ENCODE measurements at regions of chr5 and their contacts with region 1.

Region 1: DNA sequence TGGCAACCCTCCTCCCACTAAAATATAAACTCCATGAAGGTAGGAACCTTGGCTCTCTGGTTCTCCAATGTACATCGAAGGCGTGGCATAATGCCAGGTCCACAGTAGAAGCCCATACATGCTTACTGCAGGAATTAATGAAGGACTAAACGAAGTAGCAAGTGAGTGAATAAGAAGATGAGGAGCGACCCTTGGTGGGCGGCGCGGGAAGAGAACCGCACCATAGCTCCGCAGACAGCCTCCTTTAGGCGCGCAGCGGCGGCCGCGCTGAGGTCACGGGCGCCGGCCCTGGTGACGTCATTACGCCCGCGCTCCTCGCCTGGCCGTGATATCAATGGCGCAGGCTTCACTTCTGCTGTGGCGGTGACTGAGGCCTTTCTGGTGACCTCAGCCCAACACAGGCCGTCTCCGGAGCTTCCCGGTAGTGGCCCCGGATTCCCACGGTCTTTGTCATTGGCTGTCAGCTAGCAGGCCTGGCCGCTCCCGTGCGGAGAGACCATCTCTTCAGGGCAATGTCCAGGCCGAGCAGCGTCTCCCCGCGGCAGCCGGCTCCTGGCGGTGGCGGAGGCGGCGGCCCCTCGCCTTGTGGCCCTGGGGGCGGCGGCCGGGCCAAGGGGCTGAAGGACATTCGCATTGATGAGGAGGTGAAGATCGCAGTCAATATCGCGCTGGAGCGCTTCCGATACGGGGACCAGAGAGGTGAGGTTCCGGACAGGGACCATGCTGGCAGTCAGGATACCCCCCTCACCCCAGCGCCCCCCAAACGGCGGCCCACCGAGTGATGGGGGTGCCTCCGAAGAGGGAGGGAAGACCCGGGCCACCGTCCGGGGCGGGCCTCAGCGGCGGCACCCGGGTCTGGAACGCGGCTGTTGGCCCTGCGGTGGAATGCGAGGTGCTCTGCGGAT is at the start of gene YTHDC2:
- DNase-seq: peak; percentile 76 to 95 (median 84)
- ATAC-seq: peak; percentile 95
- H3K4me3 ChIP-seq: peak within 1 kb of the TSS; percentile 70
- H3K4me3 Mint-ChIP-seq: peak within 1 kb of the TSS; percentile 90
- H3K27ac ChIP-seq: peak within 1 kb of the TSS; percentile 71 to 74
- H3K27ac Mint-ChIP-seq: peak within 1 kb of the TSS; percentile 85
- H3K4me1 ChIP-seq: peaks cover 9% of the 10 kb centered on the region
- H3K4me1 Mint-ChIP-seq: peaks cover 42% of the 10 kb centered on the region
- H3K27me3 ChIP-seq: peaks cover 0 to 10% of the 10 kb centered on the region in 2 experiments
- H3K27me3 Mint-ChIP-seq: peaks cover 23% of the 10 kb centered on the region
- CTCF ChIP-seq: peak; percentile 24
- total RNA-seq, gene YTHDC2: 33.9 to 41.7 TPM

Region 2: GRCh38 chr5:112860929-112861637 is 652.6 kb before region 1 on chr5 and contains the start of gene SRP19:
- CTCF ChIA-PET with region 1: no interaction called
- POLR2A ChIA-PET with region 1: interaction called, 3 read pairs
- intact Hi-C with region 1: loop called in 1 of 2 experiments (anchors 10 kb)
- DNase-seq: peak; percentile 82 to 97 (median 86)
- ATAC-seq: peak; percentile 93
- H3K4me3 ChIP-seq: peak within 1 kb of the TSS; percentile 94
- H3K4me3 Mint-ChIP-seq: peak within 1 kb of the TSS; percentile 92
- H3K27ac ChIP-seq: peak within 1 kb of the TSS; percentile 65 to 88
- H3K27ac Mint-ChIP-seq: peak within 1 kb of the TSS; percentile 93
- H3K4me1 ChIP-seq: peaks cover 24% of the 10 kb centered on the region
- H3K4me1 Mint-ChIP-seq: peaks cover 36% of the 10 kb centered on the region
- H3K27me3 ChIP-seq: no peaks in the 10 kb centered on the region
- H3K27me3 Mint-ChIP-seq: peaks cover 12% of the 10 kb centered on the region
- CTCF ChIP-seq: no peak
- total RNA-seq, gene SRP19: 40.2 to 40.8 TPM

Region 3: DNA sequence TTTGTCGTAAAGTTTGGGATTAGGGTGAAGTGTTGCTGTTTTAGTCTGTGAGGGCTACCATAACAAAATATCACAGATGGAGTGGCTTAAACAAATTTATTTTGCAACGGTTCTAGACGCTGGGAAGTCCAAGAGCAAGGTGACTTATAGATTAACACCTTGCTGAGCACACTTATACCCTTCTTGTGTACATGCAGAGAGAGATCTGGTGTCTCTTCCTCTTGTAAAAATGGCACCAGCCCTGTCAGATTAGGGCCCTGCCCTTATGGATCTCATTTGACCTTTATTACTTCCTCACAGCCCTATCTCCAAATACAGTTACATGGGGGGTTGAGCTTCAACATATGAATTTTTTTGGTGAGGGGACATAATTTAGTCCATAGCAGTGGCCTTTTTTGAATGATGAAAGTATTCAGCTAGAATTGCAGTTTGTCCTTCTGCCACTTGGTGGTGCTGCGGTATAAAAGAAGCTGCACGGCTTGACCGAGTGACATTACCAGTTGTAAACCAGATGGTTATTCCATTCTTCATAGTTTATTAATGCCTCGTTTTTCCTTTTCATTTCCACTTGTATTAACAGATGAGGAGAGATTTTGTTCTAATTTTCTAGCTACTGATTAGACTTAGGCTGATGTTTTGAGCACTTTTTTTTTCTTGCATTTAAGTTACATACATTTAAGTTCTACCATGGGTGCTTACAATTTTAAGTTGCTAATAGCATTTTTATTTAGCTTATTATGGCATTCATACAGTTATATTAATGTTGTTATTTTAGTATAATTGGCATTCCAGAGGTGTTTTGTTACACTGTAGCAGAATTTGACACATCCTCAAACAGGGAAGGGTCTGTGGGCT is 517.6 kb before region 1 on chr5:
- CTCF ChIA-PET with region 1: interaction called, 3 read pairs
- POLR2A ChIA-PET with region 1: interaction called, 3 read pairs
- intact Hi-C with region 1: loop called (anchors 5 kb)
- DNase-seq: peak; percentile 60 to 84 (median 76)
- ATAC-seq: peak; percentile 85
- H3K4me3 ChIP-seq: no peak overlapping the region
- H3K4me3 Mint-ChIP-seq: no peak overlapping the region
- H3K27ac ChIP-seq: no peak overlapping the region
- H3K27ac Mint-ChIP-seq: no peak overlapping the region
- H3K4me1 ChIP-seq: no peaks in the 10 kb centered on the region
- H3K4me1 Mint-ChIP-seq: peaks cover 52% of the 10 kb centered on the region
- H3K27me3 ChIP-seq: no peaks in the 10 kb centered on the region
- H3K27me3 Mint-ChIP-seq: no peaks in the 10 kb centered on the region
- CTCF ChIP-seq: peak; percentile 98

Region 4: GRCh38 chr5:113330533-113331208 is 183.0 kb before region 1 on chr5:
- CTCF ChIA-PET with region 1: interaction called, 4 read pairs
- POLR2A ChIA-PET with region 1: no interaction called
- intact Hi-C with region 1: loop called in 1 of 2 experiments (anchors 5 kb)
- DNase-seq: peak in 4 of 14 experiments; percentile 14 to 78 (median 77)
- ATAC-seq: peak; percentile 90
- H3K4me3 ChIP-seq: no peak overlapping the region
- H3K4me3 Mint-ChIP-seq: no peak overlapping the region
- H3K27ac ChIP-seq: no peak overlapping the region
- H3K27ac Mint-ChIP-seq: peak overlapping the region; percentile 60
- H3K4me1 ChIP-seq: no peaks in the 10 kb centered on the region
- H3K4me1 Mint-ChIP-seq: peaks cover 21% of the 10 kb centered on the region
- H3K27me3 ChIP-seq: no peaks in the 10 kb centered on the region
- H3K27me3 Mint-ChIP-seq: no peaks in the 10 kb centered on the region
- CTCF ChIP-seq: peak; percentile 76

Region 5: GRCh38 chr5:113367586-113367985 is 146.1 kb before region 1 on chr5:
- CTCF ChIA-PET with region 1: no interaction called
- POLR2A ChIA-PET with region 1: no interaction called
- intact Hi-C with region 1: no loop called
- DNase-seq: no peak
- ATAC-seq: no peak
- H3K4me3 ChIP-seq: no peak overlapping the region
- H3K4me3 Mint-ChIP-seq: no peak overlapping the region
- H3K27ac ChIP-seq: no peak overlapping the region
- H3K27ac Mint-ChIP-seq: no peak overlapping the region
- H3K4me1 ChIP-seq: no peaks in the 10 kb centered on the region
- H3K4me1 Mint-ChIP-seq: no peaks in the 10 kb centered on the region
- H3K27me3 ChIP-seq: no peaks in the 10 kb centered on the region
- H3K27me3 Mint-ChIP-seq: peaks cover 8% of the 10 kb centered on the region
- CTCF ChIP-seq: no peak

Region 6: DNA sequence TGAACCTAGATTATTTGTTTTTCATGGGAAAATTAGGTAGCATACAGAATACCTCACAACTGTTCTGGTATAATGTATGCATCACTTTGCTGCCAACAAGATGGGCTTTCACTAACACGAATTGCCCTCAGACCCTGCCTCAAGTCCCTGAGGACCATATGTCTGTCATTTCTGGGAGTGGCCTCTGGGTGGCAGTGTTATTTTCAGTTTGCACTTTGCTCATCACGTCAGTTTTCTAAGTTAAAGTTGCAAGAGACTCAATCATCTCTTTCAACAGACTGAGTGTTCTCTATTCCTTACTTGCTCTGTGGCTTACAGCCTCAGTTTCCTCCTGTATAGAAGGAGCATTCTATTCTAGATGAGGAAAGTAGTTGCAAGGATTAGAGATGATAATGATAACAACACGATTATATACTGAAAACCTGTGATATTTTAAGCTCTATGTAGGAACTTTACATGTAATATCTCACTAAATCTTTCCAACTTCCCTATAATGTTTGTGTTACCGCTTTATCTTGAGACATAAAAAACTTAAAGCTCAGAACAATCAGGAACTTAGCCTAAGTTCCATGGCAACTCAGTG is 134.6 kb before region 1 on chr5:
- CTCF ChIA-PET with region 1: interaction called, 4 read pairs
- POLR2A ChIA-PET with region 1: no interaction called
- intact Hi-C with region 1: loop called (anchors 1 to 2 kb)
- DNase-seq: peak; percentile 19 to 74 (median 41)
- ATAC-seq: peak; percentile 68
- H3K4me3 ChIP-seq: no peak overlapping the region
- H3K4me3 Mint-ChIP-seq: peak overlapping the region; percentile 7
- H3K27ac ChIP-seq: no peak overlapping the region
- H3K27ac Mint-ChIP-seq: no peak overlapping the region
- H3K4me1 ChIP-seq: peaks cover 11% of the 10 kb centered on the region
- H3K4me1 Mint-ChIP-seq: peaks cover 58% of the 10 kb centered on the region
- H3K27me3 ChIP-seq: peaks cover 0 to 4% of the 10 kb centered on the region in 2 experiments
- H3K27me3 Mint-ChIP-seq: peaks cover 32% of the 10 kb centered on the region
- CTCF ChIP-seq: peak; percentile 82

Measured in CD4-positive, alpha-beta T cell (primary cell).